A549 (cell line): ENCODE measurements at regions of chr9 and their contacts with region 1.

Region 1: GRCh38 chr9:78035383-78035993 is 3.9 kb upstream of the GNAQ start:
- DNase-seq: peak; percentile 40 to 80
- ATAC-seq: peak in 1 of 2 experiments; percentile 27; a peak in 3 of 6 replicates
- H3K4me3 ChIP-seq: no peak overlapping the region
- H3K27ac ChIP-seq: 0 out of 6 replicates have a peak overlapping the region, but pooled peaks of 1 of the 2 experiments have one; percentile 38
- H3K4me1 ChIP-seq: peaks cover 21% of the 10 kb centered on the region
- CTCF ChIP-seq: peak; percentile 93
- EP300 ChIP-seq: no peak
- POLR2A ChIP-seq: no peak
- RAD21 ChIP-seq: peak; percentile 88 to 90

Region 2: GRCh38 chr9:77456829-77457437 is 578.6 kb before region 1 on chr9:
- CTCF ChIA-PET with region 1: interaction called, 11 read pairs
- POLR2A ChIA-PET with region 1: no interaction called
- DNase-seq: peak; percentile 87 to 90
- ATAC-seq: peak; percentile 81 to 89
- H3K4me3 ChIP-seq: no peak overlapping the region
- H3K27ac ChIP-seq: no peak overlapping the region
- H3K4me1 ChIP-seq: no peaks in the 10 kb centered on the region
- CTCF ChIP-seq: peak; percentile 69
- EP300 ChIP-seq: no peak
- POLR2A ChIP-seq: no peak
- RAD21 ChIP-seq: peak; percentile 38 to 39; a peak in 4 of 5 replicates

Region 3: GRCh38 chr9:77841739-77842386 is 193.6 kb before region 1 on chr9:
- CTCF ChIA-PET with region 1: interaction called, 28 read pairs
- POLR2A ChIA-PET with region 1: interaction called, 6 read pairs
- DNase-seq: peak in 1 of 2 experiments; percentile 24
- ATAC-seq: peak; percentile 17 to 36; a peak in 4 of 6 replicates
- H3K4me3 ChIP-seq: no peak overlapping the region
- H3K27ac ChIP-seq: peak overlapping the region; percentile 83 to 85
- H3K4me1 ChIP-seq: peaks cover 51% of the 10 kb centered on the region
- CTCF ChIP-seq: peak; percentile 64
- EP300 ChIP-seq: no peak
- POLR2A ChIP-seq: no peak
- RAD21 ChIP-seq: peak; percentile 40 to 67

Region 4: DNA sequence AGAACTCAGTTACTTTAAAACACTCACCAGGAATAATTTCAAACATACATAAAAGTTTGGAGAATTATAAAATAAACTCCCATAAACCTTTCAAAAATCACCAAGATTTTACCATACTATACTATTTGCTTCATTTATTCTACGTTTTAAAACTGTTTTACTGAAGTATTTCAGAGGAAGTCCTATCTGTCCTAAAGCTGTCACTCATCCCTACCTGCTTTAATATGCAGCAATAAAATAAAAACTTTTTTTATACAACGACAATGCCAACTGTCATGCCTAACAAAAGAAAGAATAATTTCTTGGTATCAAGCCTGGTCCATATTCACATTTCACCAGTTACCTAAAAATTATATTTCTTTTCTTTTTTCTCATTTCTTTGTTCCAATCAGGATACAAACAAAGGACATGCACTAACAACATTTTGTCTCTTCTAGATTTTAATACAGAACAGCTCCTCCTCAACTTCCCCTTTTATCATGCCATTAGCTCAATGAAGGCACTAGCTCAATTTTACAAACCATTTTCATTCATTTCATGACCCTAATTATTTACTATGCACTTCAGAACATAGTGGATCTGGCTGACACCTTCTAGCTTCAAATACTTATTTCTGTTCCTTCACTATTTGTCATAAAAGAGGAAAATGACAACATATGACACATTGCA is 139.1 kb before region 1 on chr9:
- CTCF ChIA-PET with region 1: interaction called, 11 read pairs
- POLR2A ChIA-PET with region 1: interaction called, 3 read pairs
- DNase-seq: no peak
- ATAC-seq: no peak
- H3K4me3 ChIP-seq: no peak overlapping the region
- H3K27ac ChIP-seq: no peak overlapping the region
- H3K4me1 ChIP-seq: no peaks in the 10 kb centered on the region
- CTCF ChIP-seq: no peak
- EP300 ChIP-seq: no peak
- POLR2A ChIP-seq: no peak
- RAD21 ChIP-seq: no peak

Region 5: DNA sequence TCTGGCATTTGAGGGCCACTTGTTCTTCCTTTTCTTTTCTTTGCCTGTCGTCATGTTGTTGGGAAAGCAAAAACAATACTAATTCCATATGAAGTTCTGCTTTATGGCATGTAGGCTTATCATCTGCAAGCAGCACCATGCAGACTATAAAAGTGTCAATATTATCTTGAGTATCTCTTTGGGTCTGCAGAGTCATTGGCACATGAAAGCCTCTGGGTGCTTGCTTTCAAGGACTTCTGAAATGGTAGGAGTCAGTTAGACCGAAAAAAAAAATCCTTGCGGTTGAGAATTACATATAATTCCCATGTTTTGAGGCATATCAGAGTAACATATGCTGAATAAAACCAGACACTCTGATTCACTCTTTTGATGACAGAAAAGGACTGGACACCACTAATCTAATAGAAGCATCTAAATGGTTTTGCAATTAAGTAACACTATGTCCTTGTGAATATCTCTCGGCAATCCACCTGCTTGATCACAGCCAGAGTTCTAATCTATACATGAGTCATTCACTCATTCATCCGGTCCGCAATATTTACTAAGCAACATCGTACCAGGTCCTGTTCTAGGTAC is 48.3 kb before region 1 on chr9:
- CTCF ChIA-PET with region 1: interaction called, 16 read pairs
- POLR2A ChIA-PET with region 1: no interaction called
- DNase-seq: no peak
- ATAC-seq: no peak
- H3K4me3 ChIP-seq: no peak overlapping the region
- H3K27ac ChIP-seq: no peak overlapping the region
- H3K4me1 ChIP-seq: peaks cover 19% of the 10 kb centered on the region
- CTCF ChIP-seq: no peak
- EP300 ChIP-seq: no peak
- POLR2A ChIP-seq: no peak
- RAD21 ChIP-seq: no peak

Region 6: DNA sequence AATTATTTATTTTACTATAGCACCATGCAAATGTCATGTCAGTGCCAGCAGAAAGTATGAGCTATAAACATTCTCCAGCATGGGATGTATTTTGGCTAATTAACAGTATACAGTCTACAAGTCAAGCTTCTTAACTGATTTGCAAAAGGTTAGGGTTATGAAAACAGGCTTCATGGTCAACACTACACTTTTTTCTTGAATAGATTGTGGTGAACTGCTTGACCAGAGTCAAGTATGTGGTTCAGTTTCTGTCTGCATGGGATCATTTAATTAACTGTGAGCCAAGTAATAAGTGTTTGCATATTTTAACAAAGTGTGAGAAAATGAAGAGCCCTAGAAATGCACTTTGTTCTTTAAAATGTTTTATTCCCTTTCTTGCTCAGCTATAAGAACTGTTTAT is 10.6 kb after region 1 on chr9:
- CTCF ChIA-PET with region 1: interaction called, 30 read pairs
- POLR2A ChIA-PET with region 1: no interaction called
- DNase-seq: no peak
- ATAC-seq: no peak
- H3K4me3 ChIP-seq: no peak overlapping the region
- H3K27ac ChIP-seq: no peak overlapping the region
- H3K4me1 ChIP-seq: no peaks in the 10 kb centered on the region
- CTCF ChIP-seq: no peak
- EP300 ChIP-seq: no peak
- POLR2A ChIP-seq: no peak
- RAD21 ChIP-seq: no peak

Region 7: GRCh38 chr9:78121488-78121887 is 86.0 kb after region 1 on chr9:
- CTCF ChIA-PET with region 1: interaction called, 12 read pairs
- POLR2A ChIA-PET with region 1: no interaction called
- DNase-seq: peak; percentile 21 to 55
- ATAC-seq: peak in 1 of 2 experiments; percentile 74; a peak in 3 of 6 replicates
- H3K4me3 ChIP-seq: no peak overlapping the region
- H3K27ac ChIP-seq: no peak overlapping the region
- H3K4me1 ChIP-seq: no peaks in the 10 kb centered on the region
- CTCF ChIP-seq: peak; percentile 69
- EP300 ChIP-seq: no peak
- POLR2A ChIP-seq: no peak
- RAD21 ChIP-seq: peak; percentile 74 to 76

Region 8: DNA sequence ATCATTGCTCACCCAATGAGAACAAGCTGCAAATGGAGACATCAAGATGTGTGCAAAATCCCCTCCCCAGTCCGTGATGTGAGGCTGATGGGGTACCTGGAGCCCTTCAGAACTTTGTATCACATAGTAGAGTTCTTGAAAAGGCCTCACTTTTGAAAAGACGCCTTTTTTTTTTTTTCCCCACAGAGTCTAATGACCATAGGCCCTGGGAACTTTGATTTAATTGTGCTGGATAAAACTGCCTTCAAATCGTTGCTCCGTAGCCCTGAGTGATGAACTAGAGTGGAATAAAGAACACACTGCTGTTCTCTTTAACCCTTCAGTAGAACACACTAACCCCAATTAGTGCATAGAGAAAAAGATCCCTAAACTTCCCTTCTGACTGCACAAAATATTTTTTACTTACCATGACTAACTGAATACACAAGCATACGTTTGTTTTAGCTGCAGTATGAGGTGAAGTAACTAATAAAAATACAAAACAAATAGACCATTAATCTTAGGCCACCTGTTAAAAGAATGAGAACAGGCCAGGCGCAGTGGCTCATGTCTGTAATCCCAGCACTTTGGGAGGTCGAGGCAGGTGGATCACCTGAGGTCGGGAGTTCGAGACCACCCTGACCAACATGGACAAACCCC is 276.5 kb after region 1 on chr9:
- CTCF ChIA-PET with region 1: no interaction called
- POLR2A ChIA-PET with region 1: no interaction called
- DNase-seq: no peak
- ATAC-seq: no peak
- H3K4me3 ChIP-seq: no peak overlapping the region
- H3K27ac ChIP-seq: no peak overlapping the region
- H3K4me1 ChIP-seq: peaks cover 7% of the 10 kb centered on the region; the same call in 1 of the 3 replicates
- CTCF ChIP-seq: no peak
- EP300 ChIP-seq: no peak
- POLR2A ChIP-seq: no peak
- RAD21 ChIP-seq: no peak